ENCODE measurements at regions of chr9 and their contacts with region 1.

Region 1: GRCh38 chr9:128127990-128128835 is 684 bp upstream of the PTGES2 start:
- DNase-seq: peak; percentile 87
- ATAC-seq: peak; percentile 83
- H3K4me3 Mint-ChIP-seq: peak overlapping the region; percentile 97
- H3K27ac Mint-ChIP-seq: peak overlapping the region; percentile 99
- H3K4me1 Mint-ChIP-seq: peaks cover 37% of the 10 kb centered on the region
- H3K27me3 Mint-ChIP-seq: peaks cover 18% of the 10 kb centered on the region

Region 2: GRCh38 chr9:128142061-128142460 is 13.8 kb after region 1 on chr9:
- CTCF ChIA-PET with region 1: interaction called, 16 read pairs
- POLR2A ChIA-PET with region 1: interaction called, 3 read pairs
- DNase-seq: peak; percentile 65
- ATAC-seq: peak; percentile 88
- H3K4me3 Mint-ChIP-seq: peak overlapping the region; percentile 9
- H3K27ac Mint-ChIP-seq: peak overlapping the region; percentile 86
- H3K4me1 Mint-ChIP-seq: peaks cover 17% of the 10 kb centered on the region
- H3K27me3 Mint-ChIP-seq: peaks cover 1% of the 10 kb centered on the region